Activated CD4-positive, alpha-beta T cell treated with anti-CD3 and anti-CD28 coated beads for 36 hours (primary cell): ENCODE measurements at regions of chr9 and their contacts with region 1.

Region 1: DNA sequence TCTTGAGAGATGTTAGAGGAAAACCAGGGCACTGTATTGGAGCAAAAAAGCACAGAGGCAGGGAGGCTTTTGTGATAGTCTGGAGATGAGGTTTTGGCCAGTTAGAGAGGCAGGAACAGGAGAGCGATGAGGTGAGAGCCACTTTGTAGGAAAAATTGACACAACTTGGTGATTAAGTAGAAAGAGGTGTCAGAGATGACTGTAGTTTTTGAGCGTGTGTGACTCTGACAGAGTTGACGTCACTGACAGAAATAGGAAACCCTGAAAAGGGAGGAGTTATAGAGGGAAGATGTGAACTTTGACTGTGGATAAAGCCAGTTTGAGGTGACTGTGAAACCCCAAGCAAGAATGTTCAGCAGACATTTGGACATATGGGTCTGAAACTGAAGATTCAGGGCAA is 15.7 kb downstream of the NFX1 start:
- DNase-seq: peak; percentile 59
- ATAC-seq: peak; percentile 94
- H3K4me3 Mint-ChIP-seq: no peak overlapping the region
- H3K27ac Mint-ChIP-seq: no peak overlapping the region
- H3K4me1 Mint-ChIP-seq: peaks cover 29% of the 10 kb centered on the region
- H3K27me3 Mint-ChIP-seq: no peaks in the 10 kb centered on the region

Region 2: DNA sequence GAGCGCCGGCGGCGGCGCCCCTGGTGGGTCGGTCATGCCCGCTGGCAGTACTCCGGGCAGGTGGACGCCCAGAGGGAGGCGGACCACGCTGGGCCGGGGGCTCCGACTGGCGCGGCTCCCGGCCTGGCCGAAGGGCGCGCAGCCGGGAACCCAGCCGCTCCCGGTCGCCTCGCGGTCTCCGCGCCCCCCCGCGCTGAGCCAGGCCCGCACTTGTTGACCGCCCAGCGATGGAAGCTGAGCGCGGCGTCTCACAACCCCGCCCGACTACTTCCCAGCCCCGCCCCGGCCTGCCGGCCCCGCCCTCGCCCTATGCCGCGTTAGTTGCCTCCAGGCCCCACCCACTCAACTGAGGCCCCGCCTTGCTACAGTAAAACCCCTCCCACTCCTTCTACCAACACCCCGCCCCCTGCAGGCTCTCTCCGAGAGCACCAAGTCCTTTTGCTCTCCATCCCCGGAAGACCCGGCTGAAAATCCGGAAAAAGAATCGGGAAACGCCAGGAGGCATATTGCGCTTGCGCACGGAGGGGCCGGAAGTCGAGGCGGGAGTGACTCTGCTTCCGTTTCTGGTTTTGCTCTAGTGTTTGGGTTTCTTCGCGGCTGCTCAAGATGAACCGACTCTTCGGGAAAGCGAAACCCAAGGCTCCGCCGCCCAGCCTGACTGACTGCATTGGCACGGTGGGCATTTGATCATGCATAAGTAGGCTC is 41.4 kb before region 1 on chr9 and contains the starts of genes BAG1 and CHMP5:
- CTCF ChIA-PET with region 1: no interaction called
- POLR2A ChIA-PET with region 1: no interaction called
- intact Hi-C with region 1: loop called in 1 of 2 experiments (anchors 1 kb)
- DNase-seq: peak; percentile 100
- ATAC-seq: peak; percentile 96
- H3K4me3 Mint-ChIP-seq: peak within 1 kb of the TSS; percentile 97
- H3K27ac Mint-ChIP-seq: peak within 1 kb of the TSS; percentile 99
- H3K4me1 Mint-ChIP-seq: peaks cover 51% of the 10 kb centered on the region
- H3K27me3 Mint-ChIP-seq: no peaks in the 10 kb centered on the region
- total RNA-seq, gene BAG1: 47.9 to 65.8 TPM
- total RNA-seq, gene CHMP5: 102 to 106 TPM

Region 3: DNA sequence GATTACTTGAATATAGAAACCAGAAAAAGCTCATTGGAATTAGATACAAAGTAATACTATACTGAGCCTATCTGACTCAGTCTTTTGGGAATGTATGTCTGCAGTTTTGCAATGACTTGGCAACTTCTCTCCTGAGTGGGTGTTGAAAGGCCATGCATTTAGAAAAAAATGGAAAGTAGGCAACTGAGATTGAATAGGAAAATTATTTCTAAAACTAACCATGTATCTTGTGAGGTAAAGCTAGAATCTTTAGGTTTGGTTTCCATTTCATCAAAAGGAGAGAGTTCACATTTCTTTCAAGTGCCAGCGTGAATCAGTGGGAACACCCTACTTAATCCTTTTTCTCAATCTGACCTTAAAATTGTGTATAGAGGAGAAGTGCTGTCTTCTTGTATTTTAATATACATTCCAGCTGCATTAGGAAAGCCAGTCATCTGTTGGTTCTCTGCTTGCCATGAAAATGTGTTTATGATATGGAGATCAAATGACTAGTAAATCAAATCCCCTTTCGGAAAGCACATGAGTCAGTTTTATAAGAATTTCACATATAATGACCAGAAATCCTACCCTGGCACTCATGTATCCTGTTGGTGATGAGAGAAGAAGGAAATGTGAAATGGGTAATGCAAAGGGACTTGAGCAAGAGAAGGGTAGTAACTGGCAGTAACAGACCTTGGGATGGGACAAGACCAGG is 14.7 kb after region 1 on chr9:
- CTCF ChIA-PET with region 1: interaction called, 6 read pairs
- POLR2A ChIA-PET with region 1: interaction called, 3 read pairs
- intact Hi-C with region 1: loop called in 1 of 2 experiments (anchors 1 kb)
- DNase-seq: peak; percentile 22
- ATAC-seq: peak; percentile 85
- H3K4me3 Mint-ChIP-seq: no peak overlapping the region
- H3K27ac Mint-ChIP-seq: peak overlapping the region; percentile 80
- H3K4me1 Mint-ChIP-seq: peaks cover 21% of the 10 kb centered on the region
- H3K27me3 Mint-ChIP-seq: no peaks in the 10 kb centered on the region

Region 4: GRCh38 chr9:33340186-33340585 is 34.1 kb after region 1 on chr9:
- CTCF ChIA-PET with region 1: no interaction called
- POLR2A ChIA-PET with region 1: no interaction called
- intact Hi-C with region 1: loop called in 1 of 2 experiments (anchors 5 kb)
- DNase-seq: no peak
- ATAC-seq: no peak
- H3K4me3 Mint-ChIP-seq: no peak overlapping the region
- H3K27ac Mint-ChIP-seq: no peak overlapping the region
- H3K4me1 Mint-ChIP-seq: peaks cover 7% of the 10 kb centered on the region
- H3K27me3 Mint-ChIP-seq: no peaks in the 10 kb centered on the region

Region 5: GRCh38 chr9:33364127-33364526 is 58.1 kb after region 1 on chr9:
- CTCF ChIA-PET with region 1: no interaction called
- POLR2A ChIA-PET with region 1: no interaction called
- intact Hi-C with region 1: no loop called
- DNase-seq: no peak
- ATAC-seq: no peak
- H3K4me3 Mint-ChIP-seq: no peak overlapping the region
- H3K27ac Mint-ChIP-seq: no peak overlapping the region
- H3K4me1 Mint-ChIP-seq: no peaks in the 10 kb centered on the region
- H3K27me3 Mint-ChIP-seq: no peaks in the 10 kb centered on the region